HepG2 (cell line): ENCODE measurements at regions of chr1 and their contacts with region 1.

Region 1: DNA sequence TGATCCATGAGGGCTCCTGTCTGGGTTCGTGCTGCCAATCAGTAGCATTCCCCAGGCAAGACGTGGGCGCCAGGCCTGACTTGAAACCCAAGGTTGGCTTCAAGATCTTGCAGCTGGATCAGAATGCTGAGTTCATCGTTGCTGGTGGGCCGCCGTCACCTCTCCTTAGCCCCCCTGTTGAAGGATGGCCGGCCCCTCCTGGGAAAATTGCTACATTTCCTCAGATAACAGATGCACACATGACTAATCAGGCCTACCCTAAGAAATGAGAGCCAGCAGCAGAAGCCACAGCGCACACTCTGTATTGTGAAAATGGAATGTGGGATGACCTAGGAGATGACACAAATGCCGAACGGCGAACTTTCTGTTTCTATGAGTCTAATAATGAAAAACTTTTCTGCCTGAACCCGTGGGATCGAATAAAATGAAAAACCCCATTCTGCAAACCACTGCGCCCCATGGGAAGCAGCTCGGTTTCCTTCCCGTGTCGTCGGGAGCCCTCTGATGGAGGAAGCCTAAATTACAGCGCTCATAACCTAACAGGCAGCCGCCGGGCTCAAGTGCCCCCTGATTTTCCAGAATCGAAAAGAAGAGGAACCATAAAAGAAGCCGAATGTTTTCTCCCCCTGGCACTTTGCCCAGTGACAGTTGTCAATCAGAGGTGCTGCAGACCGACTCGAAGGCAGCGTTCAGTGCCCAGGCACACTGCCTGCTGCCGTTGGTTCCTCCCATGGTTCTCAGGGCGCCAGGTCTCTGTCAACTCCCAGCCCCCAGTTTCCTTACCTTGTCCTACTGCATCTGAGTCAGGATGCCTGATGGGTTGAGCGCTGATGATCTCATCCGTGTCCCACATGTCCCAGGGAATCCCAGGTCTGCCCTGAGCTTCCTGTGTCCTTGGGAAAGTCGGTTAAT is 38.2 kb upstream of the H6PD start:
- DNase-seq: peak; percentile 72
- ATAC-seq: peak; percentile 60
- H3K4me3 ChIP-seq: peak overlapping the region; percentile 39 to 71 (median 53)
- H3K27ac ChIP-seq: no peak overlapping the region
- H3K4me1 ChIP-seq: peaks cover 71% of the 10 kb centered on the region
- H3K27me3 ChIP-seq: peaks cover 15 to 42% of the 10 kb centered on the region in 2 experiments
- CTCF ChIP-seq: peak; percentile 83
- EP300 ChIP-seq: no peak; a peak in 1 of 4 replicates
- POLR2A ChIP-seq: no peak
- RAD21 ChIP-seq: peak; percentile 86

Region 2: GRCh38 chr1:9110669-9111356 is 85.6 kb before region 1 on chr1:
- CTCF ChIA-PET with region 1: interaction called, 9 read pairs
- POLR2A ChIA-PET with region 1: interaction called, 4 read pairs
- in situ Hi-C with region 1: loop called (anchors 5 kb)
- intact Hi-C with region 1: loop called (anchors 1 kb)
- DNase-seq: peak; percentile 85
- ATAC-seq: peak; percentile 53
- H3K4me3 ChIP-seq: no peak overlapping the region; a peak in 1 of 6 replicates
- H3K27ac ChIP-seq: no peak overlapping the region
- H3K4me1 ChIP-seq: peaks cover 55% of the 10 kb centered on the region
- H3K27me3 ChIP-seq: no peaks in the 10 kb centered on the region
- CTCF ChIP-seq: peak; percentile 97
- EP300 ChIP-seq: no peak
- POLR2A ChIP-seq: no peak
- RAD21 ChIP-seq: peak; percentile 93

Region 3: DNA sequence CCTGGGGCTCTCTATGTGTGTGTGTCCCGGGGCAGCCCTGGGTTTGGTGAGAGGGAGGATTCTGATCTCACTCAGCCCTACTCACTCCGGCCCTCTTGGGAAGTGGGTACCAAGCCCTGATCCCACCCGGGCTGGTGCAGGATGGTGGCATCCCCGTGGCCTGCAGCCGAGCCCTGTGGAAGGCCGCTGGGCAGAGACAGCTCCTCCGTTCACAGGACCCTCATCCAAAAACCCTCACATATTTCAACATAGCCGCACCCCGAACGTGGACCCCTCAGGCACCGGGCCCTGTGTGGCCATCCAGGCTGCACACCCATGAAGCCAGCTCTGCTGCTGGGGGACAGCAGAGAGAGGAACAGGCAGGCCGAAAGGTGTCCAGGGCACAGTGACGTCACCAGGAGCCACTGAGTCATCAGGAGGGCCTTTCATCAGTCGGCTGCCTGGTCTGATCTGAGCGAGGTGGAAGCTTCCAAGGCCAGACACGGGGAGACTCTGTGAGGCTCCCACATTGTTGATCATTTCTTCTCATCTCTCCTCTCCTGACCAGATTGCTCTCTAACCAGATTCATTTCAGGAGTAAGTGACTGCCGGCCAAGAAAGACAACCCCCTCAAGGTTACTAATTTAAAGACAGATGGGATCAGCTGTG is 51.2 kb before region 1 on chr1:
- CTCF ChIA-PET with region 1: interaction called, 21 read pairs
- POLR2A ChIA-PET with region 1: interaction called, 3 read pairs
- in situ Hi-C with region 1: loop called (anchors 5 kb)
- intact Hi-C with region 1: loop called (anchors 1 kb)
- DNase-seq: peak; percentile 79
- ATAC-seq: peak; percentile 76
- H3K4me3 ChIP-seq: no peak overlapping the region
- H3K27ac ChIP-seq: no peak overlapping the region
- H3K4me1 ChIP-seq: peaks cover 30% of the 10 kb centered on the region
- H3K27me3 ChIP-seq: no peaks in the 10 kb centered on the region
- CTCF ChIP-seq: no peak
- EP300 ChIP-seq: no peak
- POLR2A ChIP-seq: no peak
- RAD21 ChIP-seq: no peak

Region 4: GRCh38 chr1:9181176-9181906 is 15.0 kb before region 1 on chr1:
- CTCF ChIA-PET with region 1: interaction called, 19 read pairs
- POLR2A ChIA-PET with region 1: interaction called, 11 read pairs
- in situ Hi-C with region 1: no loop called
- intact Hi-C with region 1: loop called (anchors 1 kb)
- DNase-seq: peak; percentile 61
- ATAC-seq: peak; percentile 74
- H3K4me3 ChIP-seq: peak overlapping the region; percentile 88 to 94 (median 92)
- H3K27ac ChIP-seq: peak overlapping the region; percentile 92
- H3K4me1 ChIP-seq: peaks cover 71% of the 10 kb centered on the region
- H3K27me3 ChIP-seq: no peaks in the 10 kb centered on the region; a peak in 1 of 5 replicates
- CTCF ChIP-seq: peak; percentile 99
- EP300 ChIP-seq: no peak
- POLR2A ChIP-seq: peak in 1 of 2 experiments; percentile 37; a peak in 1 of 4 replicates
- RAD21 ChIP-seq: peak; percentile 77

Region 5: GRCh38 chr1:9331558-9332346 is 135.4 kb after region 1 on chr1:
- CTCF ChIA-PET with region 1: no interaction called
- POLR2A ChIA-PET with region 1: no interaction called
- in situ Hi-C with region 1: no loop called
- intact Hi-C with region 1: no loop called
- DNase-seq: peak; percentile 47
- ATAC-seq: no peak
- H3K4me3 ChIP-seq: no peak overlapping the region
- H3K27ac ChIP-seq: no peak overlapping the region
- H3K4me1 ChIP-seq: peaks cover 21% of the 10 kb centered on the region
- H3K27me3 ChIP-seq: no peaks in the 10 kb centered on the region
- CTCF ChIP-seq: no peak
- EP300 ChIP-seq: no peak
- POLR2A ChIP-seq: no peak
- RAD21 ChIP-seq: no peak